ENCODE measurements at regions of chr4 and their contacts with region 1.

Region 1: DNA sequence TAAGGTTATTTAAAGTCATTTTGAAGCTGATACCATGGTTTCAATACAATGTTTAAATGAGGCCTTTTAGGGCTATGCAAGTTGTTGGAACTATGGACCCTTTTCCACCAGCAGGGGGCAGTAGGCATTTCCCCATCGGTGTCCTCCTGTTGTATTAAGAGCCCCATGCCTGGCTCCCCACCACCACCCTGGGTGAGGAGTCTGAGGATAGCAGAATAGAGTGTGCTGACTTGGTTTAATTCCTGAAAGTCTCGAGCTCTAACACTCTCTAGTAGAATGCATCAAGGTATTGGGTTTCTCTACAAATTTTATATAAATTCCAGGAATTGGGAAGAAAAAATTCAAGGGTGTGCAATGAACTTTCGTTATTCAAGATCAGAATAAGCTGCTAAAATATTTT is 234.8 kb upstream of the JADE1 start:
- DNase-seq: peak; percentile 70
- CTCF ChIP-seq: peak; percentile 51

Region 2: GRCh38 chr4:128558896-128559679 is 15.6 kb before region 1 on chr4:
- CTCF ChIA-PET with region 1: interaction called, 60 read pairs
- POLR2A ChIA-PET with region 1: no interaction called
- DNase-seq: no peak
- CTCF ChIP-seq: no peak